SK-N-SH (cell line): ENCODE measurements at regions of chr19 and their contacts with region 1.

Region 1: DNA sequence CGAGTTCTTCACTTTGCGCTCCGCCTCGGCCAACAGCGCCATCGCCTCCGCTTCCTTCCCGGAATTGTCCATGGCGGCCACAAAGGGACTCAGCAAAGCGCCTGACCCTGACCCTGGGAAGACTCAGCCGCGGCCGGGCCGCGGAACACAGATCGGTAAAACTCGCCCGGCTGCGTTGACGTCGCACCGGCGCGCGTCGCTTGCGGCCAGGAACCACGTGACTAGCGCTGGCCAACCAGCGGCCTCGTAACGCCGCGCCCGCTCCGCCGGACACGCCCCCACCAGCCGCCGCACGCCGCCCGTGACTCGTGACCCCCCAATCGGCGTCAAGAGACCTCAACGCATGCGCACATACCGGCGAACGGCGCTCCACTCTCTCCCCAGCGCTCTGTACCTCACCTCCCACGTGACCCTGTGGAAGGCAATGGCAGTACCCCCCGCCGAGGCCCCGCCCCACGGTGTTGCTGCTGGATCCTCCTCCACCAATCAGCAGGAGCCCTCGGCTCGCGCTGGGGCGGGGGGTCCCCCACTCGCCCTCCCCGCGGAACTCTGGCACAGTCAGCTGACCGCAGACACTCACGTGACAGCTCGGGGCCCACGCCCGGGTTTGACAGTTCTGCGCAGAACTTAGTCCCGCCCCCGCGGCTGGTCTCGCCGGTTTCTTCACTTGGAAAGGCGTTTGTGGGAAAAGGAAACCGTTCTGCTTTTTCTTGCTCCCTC is at the start of gene NAPA:
- DNase-seq: peak; percentile 99
- H3K4me3 ChIP-seq: peak within 1 kb of the TSS; percentile 91 to 97
- H3K27ac ChIP-seq: peak within 1 kb of the TSS; percentile 81 to 88
- H3K4me1 ChIP-seq: peaks cover 15 to 16% of the 10 kb centered on the region in 2 experiments; a peak in 3 of 4 replicates
- H3K27me3 ChIP-seq: no peaks in the 10 kb centered on the region
- CTCF ChIP-seq: no peak
- EP300 ChIP-seq: peak in 1 of 2 experiments; percentile 60; a peak in 1 of 4 replicates
- RAD21 ChIP-seq: peak; percentile 81
- polyA plus RNA-seq, gene NAPA: 80.0 and 84.1 TPM in 2 replicates

Region 2: GRCh38 chr19:47494729-47495128 is 20.3 kb before region 1 on chr19:
- CTCF ChIA-PET with region 1: interaction called, 44 read pairs
- POLR2A ChIA-PET with region 1: no interaction called
- DNase-seq: peak; percentile 98
- H3K4me3 ChIP-seq: no peak overlapping the region
- H3K27ac ChIP-seq: peak overlapping the region in 1 of 2 experiments; percentile 84; a peak in 2 of 4 replicates
- H3K4me1 ChIP-seq: peaks cover 0 to 82% of the 10 kb centered on the region in 2 experiments; a peak in 1 of 4 replicates
- H3K27me3 ChIP-seq: no peaks in the 10 kb centered on the region
- CTCF ChIP-seq: no peak
- EP300 ChIP-seq: peak in 1 of 2 experiments; percentile 65; a peak in 1 of 4 replicates
- RAD21 ChIP-seq: no peak

Region 3: GRCh38 chr19:47499863-47500830 is 14.9 kb before region 1 on chr19:
- CTCF ChIA-PET with region 1: interaction called, 44 read pairs
- POLR2A ChIA-PET with region 1: no interaction called
- DNase-seq: no peak
- H3K4me3 ChIP-seq: no peak overlapping the region
- H3K27ac ChIP-seq: peak overlapping the region in 1 of 2 experiments; percentile 84; a peak in 1 of 4 replicates
- H3K4me1 ChIP-seq: peaks cover 0 to 46% of the 10 kb centered on the region in 2 experiments; a peak in 1 of 4 replicates
- H3K27me3 ChIP-seq: no peaks in the 10 kb centered on the region
- CTCF ChIP-seq: no peak
- EP300 ChIP-seq: no peak
- RAD21 ChIP-seq: no peak

Region 4: GRCh38 chr19:47531640-47532387 is 16.8 kb after region 1 on chr19:
- CTCF ChIA-PET with region 1: interaction called, 23 read pairs
- POLR2A ChIA-PET with region 1: no interaction called
- DNase-seq: no peak
- H3K4me3 ChIP-seq: no peak overlapping the region
- H3K27ac ChIP-seq: no peak overlapping the region
- H3K4me1 ChIP-seq: peaks cover 0 to 4% of the 10 kb centered on the region in 2 experiments; a peak in 1 of 4 replicates
- H3K27me3 ChIP-seq: no peaks in the 10 kb centered on the region
- CTCF ChIP-seq: no peak
- EP300 ChIP-seq: no peak
- RAD21 ChIP-seq: no peak

Region 5: GRCh38 chr19:47600246-47601179 is 85.5 kb after region 1 on chr19:
- CTCF ChIA-PET with region 1: interaction called, 11 read pairs
- POLR2A ChIA-PET with region 1: interaction called, 7 read pairs
- DNase-seq: peak; percentile 100
- H3K4me3 ChIP-seq: peak overlapping the region; percentile 56 to 57
- H3K27ac ChIP-seq: peak overlapping the region; percentile 71 to 73
- H3K4me1 ChIP-seq: peaks cover 0 to 13% of the 10 kb centered on the region in 2 experiments; a peak in 2 of 4 replicates
- H3K27me3 ChIP-seq: no peaks in the 10 kb centered on the region
- CTCF ChIP-seq: peak; percentile 13; the same call in 1 of the 2 replicates
- EP300 ChIP-seq: 0 out of 4 replicates have a peak, but pooled peaks of 1 of the 2 experiments have one; percentile 7
- RAD21 ChIP-seq: no peak